Lower leg skin (tissue), 4 donors: ENCODE measurements at regions of chr11 and their contacts with region 1.

Region 1: DNA sequence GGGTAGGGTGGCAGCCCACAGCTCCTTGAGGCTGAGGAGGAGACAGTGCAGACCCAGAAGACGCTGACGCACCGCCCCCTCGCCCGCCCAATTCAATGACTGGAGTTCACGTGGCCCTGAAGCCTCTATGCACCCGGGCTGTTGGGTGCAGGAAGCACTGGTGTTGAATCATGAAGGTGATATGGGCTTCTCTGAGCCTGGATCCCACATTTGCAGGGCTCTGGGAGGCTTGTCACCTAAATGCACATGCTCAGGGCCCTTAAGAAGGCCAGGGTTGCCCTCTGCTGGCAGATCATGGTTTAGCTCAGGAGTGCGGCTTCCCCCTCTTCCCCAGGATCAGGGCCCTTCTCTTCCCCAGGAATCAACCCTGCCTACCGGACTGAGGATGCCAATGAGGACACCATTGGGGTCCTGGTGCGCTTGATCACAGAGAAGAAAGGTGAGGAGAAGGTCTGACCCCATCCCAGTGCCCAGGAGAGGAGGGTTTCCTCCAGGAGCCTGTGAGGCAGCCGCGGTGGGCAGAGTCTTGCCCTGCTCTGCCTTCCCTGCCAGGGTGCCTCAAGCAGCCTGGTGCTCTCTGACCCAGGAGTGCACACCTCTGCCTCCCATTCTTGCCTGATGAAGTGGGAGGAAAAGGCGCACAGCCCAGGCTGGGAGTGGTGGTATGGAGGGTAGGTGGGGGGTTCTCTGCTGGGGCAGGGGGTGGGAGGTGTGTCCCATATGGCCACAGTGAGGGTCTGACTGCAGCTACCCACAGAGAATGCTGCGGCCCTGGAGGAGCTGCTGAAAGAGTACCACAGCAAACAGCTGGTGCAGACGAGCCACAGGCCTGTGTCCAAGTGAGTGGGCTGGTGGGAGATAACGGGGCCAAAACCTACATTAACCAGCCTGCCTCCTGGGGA is 17.5 kb downstream of the RELT start:
- DNase-seq: peak in 1 of 2 donors; percentile 55
- H3K4me3 ChIP-seq: no peak overlapping the region
- CTCF ChIP-seq: peak in 1 of 3 donors; percentile 31
- POLR2A ChIP-seq: no peak

Region 2: GRCh38 chr11:73350908-73351636 is 42.7 kb before region 1 on chr11:
- intact Hi-C with region 1: loop called (anchors 5 kb)
- DNase-seq: peak in 1 of 2 donors; percentile 39
- H3K4me3 ChIP-seq: no peak overlapping the region
- CTCF ChIP-seq: peak in 1 of 3 donors; percentile 89
- POLR2A ChIP-seq: no peak